ENCODE measurements at regions of chr3 and their contacts with region 1.

Region 1: GRCh38 chr3:134754768-134755559 is 40.1 kb upstream of the EPHB1 start:
- DNase-seq: peak; percentile 13 to 29
- ATAC-seq: peak in 3 of 8 donors; percentile 28 to 43 (median 41)
- H3K4me3 ChIP-seq: no peak overlapping the region
- H3K27ac ChIP-seq: no peak overlapping the region
- H3K4me1 ChIP-seq: peaks cover 0 to 21% (median 5%) of the 10 kb centered on the region in 9 donors
- H3K27me3 ChIP-seq: peaks cover 0 to 6% (median 0%) of the 10 kb centered on the region in 7 donors
- CTCF ChIP-seq: peak; percentile 17 to 69 (median 51)

Region 2: GRCh38 chr3:133763797-133764683 is 990.9 kb before region 1 on chr3:
- intact Hi-C with region 1: no loop called
- DNase-seq: peak in 1 of 2 donors; percentile 68
- ATAC-seq: peak; percentile 30 to 93 (median 87)
- H3K4me3 ChIP-seq: no peak overlapping the region
- H3K27ac ChIP-seq: no peak overlapping the region
- H3K4me1 ChIP-seq: peaks cover 0 to 17% (median 8%) of the 10 kb centered on the region in 9 donors
- H3K27me3 ChIP-seq: no peaks in the 10 kb centered on the region
- CTCF ChIP-seq: no peak

Region 3: DNA sequence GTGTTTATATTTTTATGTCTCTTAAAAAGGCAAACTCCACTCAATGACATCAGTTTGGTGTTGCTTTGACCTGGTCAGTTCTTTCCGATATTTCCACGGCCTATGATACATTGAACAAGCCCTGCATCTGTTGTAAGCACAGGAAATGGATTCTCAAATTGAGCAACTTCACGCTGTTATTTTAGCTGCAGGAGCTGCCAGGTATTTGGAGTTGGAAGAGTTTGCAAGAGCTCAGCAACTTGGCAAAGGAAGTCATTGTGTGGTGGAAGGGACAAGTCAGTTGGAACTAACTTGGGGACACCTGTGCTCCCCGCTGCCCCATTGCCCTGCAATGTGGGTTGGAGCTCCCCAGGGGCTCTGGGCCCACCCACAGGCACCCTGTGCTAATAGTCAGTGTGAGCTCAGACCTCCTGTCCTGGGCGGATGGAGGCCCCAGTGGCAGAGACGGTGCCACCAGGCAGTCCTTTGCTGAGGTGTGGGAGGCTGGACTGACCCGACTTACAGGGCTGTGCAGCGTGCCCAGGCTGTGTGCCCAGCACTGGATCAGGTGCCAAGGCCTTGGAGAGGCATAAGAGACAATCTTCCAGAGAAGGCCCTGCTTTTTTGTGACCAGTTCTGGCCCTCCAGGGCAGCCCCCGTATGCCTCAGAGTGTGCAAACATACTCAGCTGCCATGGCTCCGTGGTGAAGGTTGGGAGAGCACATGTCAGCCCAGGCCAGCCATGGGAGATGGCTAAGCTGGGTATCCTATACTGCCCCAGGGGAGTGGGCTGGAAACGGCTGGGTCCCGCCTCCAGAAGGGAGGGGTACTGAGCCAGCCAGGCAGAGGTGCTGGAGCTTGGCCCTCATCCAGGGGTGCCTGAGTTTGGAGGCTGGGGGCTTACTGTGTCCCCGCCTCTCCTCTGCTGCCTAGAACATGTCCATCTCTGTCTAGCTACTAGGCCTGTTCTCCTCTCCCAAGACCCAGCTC is 147.6 kb before region 1 on chr3:
- intact Hi-C with region 1: loop called in 2 of 10 experiments (anchors 5 to 10 kb)
- DNase-seq: no peak
- ATAC-seq: no peak
- H3K4me3 ChIP-seq: no peak overlapping the region
- H3K27ac ChIP-seq: peak overlapping the region in 1 of 10 donors; percentile 64
- H3K4me1 ChIP-seq: peaks cover 0 to 20% (median 6%) of the 10 kb centered on the region in 9 donors
- H3K27me3 ChIP-seq: no peaks in the 10 kb centered on the region
- CTCF ChIP-seq: no peak

Region 4: GRCh38 chr3:134640872-134641470 is 114.0 kb before region 1 on chr3:
- intact Hi-C with region 1: loop called in 1 of 10 experiments (anchors 10 kb)
- DNase-seq: no peak
- ATAC-seq: no peak
- H3K4me3 ChIP-seq: no peak overlapping the region
- H3K27ac ChIP-seq: peak overlapping the region in 2 of 10 donors; percentile 16 to 22
- H3K4me1 ChIP-seq: peaks cover 0 to 45% (median 25%) of the 10 kb centered on the region in 9 donors
- H3K27me3 ChIP-seq: no peaks in the 10 kb centered on the region
- CTCF ChIP-seq: peak in 7 of 9 donors; percentile 29 to 51 (median 44)

Region 5: GRCh38 chr3:134650431-134651346 is 104.3 kb before region 1 on chr3 and contains the start of gene KY:
- intact Hi-C with region 1: loop called in 6 of 10 experiments (anchors 2 to 10 kb)
- DNase-seq: peak; percentile 48 to 71
- ATAC-seq: peak; percentile 85 to 95 (median 93)
- H3K4me3 ChIP-seq: peak within 1 kb of the TSS; percentile 40 to 64 (median 58)
- H3K27ac ChIP-seq: peak within 1 kb of the TSS; percentile 75 to 94 (median 88)
- H3K4me1 ChIP-seq: peaks cover 2 to 40% (median 15%) of the 10 kb centered on the region in 9 donors
- H3K27me3 ChIP-seq: peaks cover 0 to 24% (median 5%) of the 10 kb centered on the region in 7 donors
- CTCF ChIP-seq: peak in 6 of 9 donors; percentile 17 to 54 (median 42)
- total RNA-seq, gene KY: 3.8 to 24.3 (median 10.5) TPM

Region 6: DNA sequence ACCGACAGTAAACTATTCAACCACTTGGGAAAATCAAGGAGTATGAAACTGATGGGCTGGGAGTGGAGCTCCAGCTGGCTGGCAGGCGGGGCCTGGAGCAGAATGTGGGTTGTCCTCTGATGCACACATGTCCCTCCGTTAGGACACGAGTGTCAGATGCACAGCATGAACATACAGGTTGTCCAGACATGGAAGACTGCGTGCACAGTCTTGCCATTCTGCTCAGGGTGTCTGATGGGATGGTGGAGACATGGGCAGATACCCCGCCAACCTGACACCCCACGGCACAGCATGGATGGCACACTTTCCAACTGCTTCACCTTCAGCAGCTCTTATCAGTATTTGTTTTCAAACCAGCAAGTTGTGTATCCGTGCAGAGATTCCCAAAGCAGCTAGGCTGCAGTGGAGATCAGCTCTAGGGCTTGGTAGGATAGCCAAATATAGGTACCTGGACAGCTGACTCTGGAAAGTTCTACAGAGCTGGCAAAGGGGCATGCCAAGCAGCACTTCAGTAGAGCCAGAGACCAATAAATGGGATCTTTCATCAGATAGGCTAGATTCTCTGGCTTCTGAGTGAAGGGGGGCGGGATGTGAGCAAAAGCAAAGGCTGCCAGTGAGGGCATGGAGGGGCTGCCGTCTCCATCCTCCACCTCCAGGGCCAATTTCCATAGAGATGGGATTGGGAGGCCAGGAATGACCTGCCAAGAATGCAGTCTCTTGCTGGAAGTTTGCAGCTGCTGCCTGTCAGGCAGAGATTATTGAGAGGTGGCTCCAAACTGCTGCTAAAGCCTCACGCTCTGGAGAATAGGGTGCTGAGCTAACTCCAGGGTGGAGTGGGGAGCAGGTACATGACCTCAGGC is 56.9 kb before region 1 on chr3:
- intact Hi-C with region 1: loop called in 2 of 10 experiments (anchors 5 to 10 kb)
- DNase-seq: no peak
- ATAC-seq: peak; percentile 39 to 81 (median 66)
- H3K4me3 ChIP-seq: no peak overlapping the region
- H3K27ac ChIP-seq: peak overlapping the region in 8 of 10 donors; percentile 25 to 75 (median 57)
- H3K4me1 ChIP-seq: peaks cover 0 to 67% (median 21%) of the 10 kb centered on the region in 9 donors
- H3K27me3 ChIP-seq: no peaks in the 10 kb centered on the region
- CTCF ChIP-seq: peak in 3 of 9 donors; percentile 10 to 21 (median 16)